ENCODE measurements at regions of chr12 and their contacts with region 1.

Region 1: DNA sequence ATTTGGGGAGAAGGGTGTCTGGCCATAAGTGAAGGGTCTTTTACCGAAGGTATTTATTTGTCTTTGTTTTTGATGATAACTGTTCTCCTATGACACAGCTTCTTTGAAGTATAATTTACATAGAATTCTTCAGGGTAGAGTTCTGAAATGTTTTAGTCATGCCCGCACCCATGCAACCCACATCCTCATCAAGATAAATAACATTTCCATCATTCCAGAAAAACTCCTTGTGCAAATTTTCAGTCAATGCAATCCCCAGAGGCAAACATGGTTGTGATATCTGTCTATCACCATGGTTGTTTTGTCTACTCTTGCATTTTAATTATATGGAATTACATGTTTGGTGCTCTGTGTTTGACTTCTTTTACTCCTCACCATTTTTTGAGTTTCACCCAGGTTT is 837.7 kb downstream of the AACS start:
- DNase-seq: no peak
- H3K4me3 ChIP-seq: no peak overlapping the region
- CTCF ChIP-seq: no peak

Region 2: GRCh38 chr12:125804659-125805058 is 98.3 kb before region 1 on chr12:
- in situ Hi-C with region 1: no loop called
- DNase-seq: no peak
- H3K4me3 ChIP-seq: no peak overlapping the region
- CTCF ChIP-seq: no peak

Region 3: DNA sequence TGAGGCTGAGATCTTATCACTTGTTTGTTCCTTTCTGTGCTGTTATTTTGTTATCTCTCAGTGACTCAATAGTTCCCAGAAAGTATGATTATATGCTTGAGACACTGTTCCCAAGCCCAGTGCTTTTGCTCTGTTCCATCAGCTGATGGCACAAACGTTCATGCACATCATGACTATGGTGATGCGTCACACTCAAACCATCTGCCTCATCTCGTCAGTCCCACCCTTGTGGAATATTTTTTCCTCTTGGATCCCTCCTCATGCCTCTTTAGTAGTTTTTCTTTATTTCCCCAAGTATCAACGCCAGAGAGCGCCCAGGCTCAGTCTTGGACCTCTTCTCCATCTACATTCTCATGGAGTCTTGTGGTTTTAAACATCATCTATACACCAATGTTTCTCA is 50.8 kb before region 1 on chr12:
- in situ Hi-C with region 1: loop called (anchors 5 kb)
- DNase-seq: no peak
- H3K4me3 ChIP-seq: no peak overlapping the region
- CTCF ChIP-seq: no peak